ENCODE measurements at regions of chr4 and their contacts with region 1.

Region 1: GRCh38 chr4:57369446-57369845 is 259.3 kb upstream of the IGFBP7 start:
- DNase-seq: no peak
- CTCF ChIP-seq: no peak

Region 2: GRCh38 chr4:57355101-57355665 is 14.3 kb before region 1 on chr4:
- CTCF ChIA-PET with region 1: interaction called, 11 read pairs
- POLR2A ChIA-PET with region 1: no interaction called
- DNase-seq: no peak
- CTCF ChIP-seq: no peak